Posterior cingulate gyrus (tissue), 11 donors: ENCODE measurements at regions of chr15 and their contacts with region 1.

Region 1: GRCh38 chr15:96992817-96993216 is 662.3 kb downstream of the NR2F2 start:
- DNase-seq: no peak

Region 2: DNA sequence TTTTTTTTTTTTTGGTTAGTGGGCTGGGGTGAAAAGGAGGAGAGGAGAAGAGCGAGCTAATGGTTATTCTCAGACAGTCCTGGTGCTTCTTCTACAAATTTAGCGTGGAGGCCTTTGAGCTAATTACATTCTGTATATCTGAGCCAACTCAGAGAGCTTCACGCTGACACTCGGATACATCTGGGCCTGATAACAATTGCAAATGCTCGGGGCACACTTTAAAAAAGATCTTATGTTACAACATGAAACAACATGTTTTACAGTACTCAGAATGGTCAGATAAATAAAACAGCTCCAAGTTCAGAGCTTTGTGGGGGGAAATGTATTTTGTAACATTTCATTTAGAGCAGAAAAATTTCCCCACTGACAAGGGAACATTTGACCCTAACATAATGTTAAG is 1629.2 kb before region 1 on chr15:
- intact Hi-C with region 1: no loop called
- DNase-seq: no peak

Region 3: DNA sequence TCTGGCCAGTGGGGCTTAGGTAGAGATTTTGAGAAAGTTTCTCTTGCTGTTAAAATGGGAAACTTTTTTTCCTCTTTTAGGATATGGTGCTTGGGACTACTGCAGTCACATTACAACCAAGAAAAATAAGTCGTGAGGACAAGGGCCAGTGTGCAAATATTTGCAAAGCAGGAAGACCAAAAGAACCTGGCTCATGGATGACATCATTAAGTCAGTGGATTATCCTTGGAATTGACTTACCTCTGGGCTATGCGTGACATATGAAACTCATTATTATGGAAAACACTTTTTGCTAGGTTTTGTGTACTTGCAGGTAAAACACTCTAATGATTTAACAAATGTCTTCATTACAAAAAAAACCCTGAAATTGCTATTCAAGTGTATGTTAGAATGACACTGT is 60.2 kb before region 1 on chr15:
- intact Hi-C with region 1: loop called (anchors 10 kb)
- DNase-seq: no peak

Region 4: DNA sequence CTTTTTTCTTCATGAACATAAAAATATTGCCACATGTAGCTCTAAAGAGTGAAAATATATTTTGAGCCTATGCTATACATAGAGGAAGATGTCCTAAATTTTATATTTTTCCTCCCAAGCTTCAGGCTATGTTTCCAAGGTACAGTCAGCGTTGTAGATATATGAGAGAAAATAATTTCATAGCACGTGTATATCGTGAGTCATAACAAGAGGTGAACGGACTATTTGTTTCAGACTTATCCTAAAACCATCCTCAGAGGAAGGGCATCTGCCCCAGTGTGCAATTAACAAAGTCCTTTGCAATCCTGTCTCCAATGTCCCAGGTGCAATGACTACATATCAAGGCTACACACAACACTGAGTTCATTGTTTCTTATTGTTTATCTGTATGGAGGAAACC is 790.4 kb after region 1 on chr15:
- intact Hi-C with region 1: no loop called
- DNase-seq: no peak

Region 5: GRCh38 chr15:98085003-98085639 is 1092.3 kb after region 1 on chr15:
- intact Hi-C with region 1: no loop called
- DNase-seq: peak in 3 of 10 donors; percentile 21 to 32 (median 24)